ENCODE measurements at regions of chr2 and their contacts with region 1.

Region 1: GRCh38 chr2:159516241-159516766 is 100.0 kb downstream of the BAZ2B start:
- DNase-seq: peak; percentile 45
- ATAC-seq: peak; percentile 88
- H3K4me3 ChIP-seq: peak overlapping the region; percentile 49
- H3K27ac ChIP-seq: peak overlapping the region; percentile 86
- H3K4me1 ChIP-seq: no peaks in the 10 kb centered on the region; the same call in 1 of the 2 replicates
- H3K27me3 ChIP-seq: no peaks in the 10 kb centered on the region
- CTCF ChIP-seq: peak in 2 of 3 experiments; percentile 16 to 36; a peak in 3 of 6 replicates
- EP300 ChIP-seq: no peak
- POLR2A ChIP-seq: peak; percentile 40; the same call in 1 of the 2 replicates
- RAD21 ChIP-seq: peak; percentile 42; the same call in 1 of the 2 replicates

Region 2: DNA sequence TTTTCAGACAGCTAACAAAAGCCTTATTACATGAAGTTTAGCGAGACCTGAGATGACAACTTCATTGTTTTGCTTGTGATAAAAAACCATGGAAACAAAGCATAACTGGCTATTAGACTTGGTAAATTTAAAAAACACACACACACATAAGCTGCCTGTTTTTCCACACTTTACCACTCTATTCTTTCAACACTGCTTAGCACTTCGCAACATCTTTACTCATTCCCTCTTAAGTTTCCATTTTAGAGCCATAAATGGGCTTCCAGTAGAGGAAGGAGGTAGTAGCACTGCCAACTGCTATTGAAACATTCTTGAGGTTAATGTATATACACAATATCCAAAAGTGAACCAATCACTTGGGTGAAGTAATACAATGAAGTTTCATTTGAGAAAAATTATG is 45.9 kb after region 1 on chr2:
- CTCF ChIA-PET with region 1: no interaction called
- POLR2A ChIA-PET with region 1: no interaction called
- RAD21 ChIA-PET with region 1: no interaction called
- SMC1A ChIA-PET with region 1: no interaction called
- in situ Hi-C with region 1: no loop called
- intact Hi-C with region 1: no loop called
- DNase-seq: no peak
- ATAC-seq: no peak
- H3K4me3 ChIP-seq: no peak overlapping the region
- H3K27ac ChIP-seq: no peak overlapping the region
- H3K4me1 ChIP-seq: no peaks in the 10 kb centered on the region
- H3K27me3 ChIP-seq: no peaks in the 10 kb centered on the region
- CTCF ChIP-seq: no peak
- EP300 ChIP-seq: no peak
- POLR2A ChIP-seq: no peak
- RAD21 ChIP-seq: no peak

Region 3: DNA sequence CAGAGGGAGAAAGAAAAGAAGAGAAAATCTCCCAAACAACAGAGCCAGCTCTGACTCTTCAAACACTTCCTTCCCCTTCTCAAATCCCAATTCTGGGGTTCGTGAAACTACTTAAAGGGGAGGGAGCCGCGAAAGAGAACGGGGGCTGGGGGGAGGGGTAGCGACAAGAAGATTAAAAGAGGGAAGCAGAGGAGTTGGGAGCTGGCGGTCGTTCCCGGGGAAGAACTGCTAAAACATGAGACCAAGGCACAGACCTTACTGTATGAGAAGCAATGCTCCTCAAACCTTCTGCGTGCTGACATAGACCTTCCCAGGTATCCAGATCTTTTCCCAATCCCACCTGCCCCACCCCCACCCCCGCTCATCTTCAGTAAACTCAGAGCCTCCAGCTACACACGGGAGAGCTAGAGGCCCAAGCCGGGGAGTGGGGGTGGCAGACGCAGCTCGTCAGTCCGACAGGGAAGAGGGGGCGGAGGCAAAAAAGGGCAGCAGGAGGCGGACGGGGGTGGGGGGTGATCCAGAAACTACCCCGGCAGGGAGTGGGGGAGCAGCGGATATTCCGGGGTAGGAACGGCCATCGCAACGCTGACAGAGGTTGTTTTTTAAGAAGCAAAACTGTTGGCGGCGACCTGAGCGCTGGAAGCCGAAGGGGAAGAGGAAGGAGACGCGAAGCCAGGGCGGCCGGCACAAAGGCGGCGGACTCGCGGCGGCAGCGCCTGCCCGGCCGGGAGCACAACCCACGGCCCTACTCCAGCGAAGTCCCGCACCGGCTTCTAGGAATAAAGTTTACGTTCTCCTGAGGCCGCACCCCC is 99.0 kb after region 1 on chr2:
- CTCF ChIA-PET with region 1: interaction called, 5 read pairs
- POLR2A ChIA-PET with region 1: no interaction called
- RAD21 ChIA-PET with region 1: interaction called, 10 read pairs
- SMC1A ChIA-PET with region 1: interaction called, 6 read pairs
- in situ Hi-C with region 1: no loop called
- intact Hi-C with region 1: loop called (anchors 5 kb)
- DNase-seq: peak; percentile 46
- ATAC-seq: peak; percentile 85
- H3K4me3 ChIP-seq: peak overlapping the region; percentile 70
- H3K27ac ChIP-seq: peak overlapping the region; percentile 73
- H3K4me1 ChIP-seq: no peaks in the 10 kb centered on the region; the same call in 1 of the 2 replicates
- H3K27me3 ChIP-seq: no peaks in the 10 kb centered on the region
- CTCF ChIP-seq: no peak
- EP300 ChIP-seq: no peak
- POLR2A ChIP-seq: peak; percentile 78
- RAD21 ChIP-seq: peak; percentile 25; the same call in 1 of the 2 replicates